Astrocyte of the cerebellum (primary cell): ENCODE measurements at regions of chr2 and their contacts with region 1.

Region 1: GRCh38 chr2:197461057-197461456 is 7.7 kb downstream of the COQ10B start:
- DNase-seq: no peak
- H3K4me3 ChIP-seq: no peak overlapping the region
- CTCF ChIP-seq: no peak

Region 2: DNA sequence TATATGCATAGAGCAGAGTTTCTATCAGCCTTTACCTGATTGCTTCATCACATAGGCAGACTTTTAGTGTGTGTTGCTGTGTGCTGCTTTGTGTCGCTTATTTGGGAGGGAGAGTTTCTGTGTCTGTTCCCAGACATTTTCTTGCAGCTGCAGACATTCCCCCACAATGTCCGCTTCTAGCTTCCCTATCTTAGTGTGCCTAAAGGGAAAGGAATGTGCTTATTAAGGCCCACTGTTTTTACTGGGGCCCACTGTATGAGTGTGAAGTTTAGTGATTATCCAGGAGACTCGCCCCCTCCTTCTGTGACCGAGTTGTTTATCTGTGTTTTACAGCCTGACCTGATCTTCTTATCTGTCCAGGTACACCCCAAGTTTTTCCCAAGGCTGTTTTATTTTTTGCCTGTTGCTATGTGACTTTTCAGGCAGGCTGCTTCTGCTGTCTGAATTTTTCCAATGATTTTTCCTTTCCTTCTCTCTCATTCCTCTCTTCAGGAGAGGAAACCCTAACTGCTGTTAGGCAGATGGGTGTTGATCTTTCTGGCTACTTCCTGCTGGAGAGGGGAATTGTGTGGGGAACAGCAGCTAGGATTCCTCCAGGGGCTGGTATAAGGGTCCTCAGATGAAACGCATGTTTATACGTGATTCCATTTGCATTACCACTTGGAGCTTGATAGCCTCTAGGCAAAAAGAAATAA is 1337.2 kb before region 1 on chr2:
- in situ Hi-C with region 1: no loop called
- DNase-seq: no peak
- H3K4me3 ChIP-seq: no peak overlapping the region
- CTCF ChIP-seq: no peak

Region 3: DNA sequence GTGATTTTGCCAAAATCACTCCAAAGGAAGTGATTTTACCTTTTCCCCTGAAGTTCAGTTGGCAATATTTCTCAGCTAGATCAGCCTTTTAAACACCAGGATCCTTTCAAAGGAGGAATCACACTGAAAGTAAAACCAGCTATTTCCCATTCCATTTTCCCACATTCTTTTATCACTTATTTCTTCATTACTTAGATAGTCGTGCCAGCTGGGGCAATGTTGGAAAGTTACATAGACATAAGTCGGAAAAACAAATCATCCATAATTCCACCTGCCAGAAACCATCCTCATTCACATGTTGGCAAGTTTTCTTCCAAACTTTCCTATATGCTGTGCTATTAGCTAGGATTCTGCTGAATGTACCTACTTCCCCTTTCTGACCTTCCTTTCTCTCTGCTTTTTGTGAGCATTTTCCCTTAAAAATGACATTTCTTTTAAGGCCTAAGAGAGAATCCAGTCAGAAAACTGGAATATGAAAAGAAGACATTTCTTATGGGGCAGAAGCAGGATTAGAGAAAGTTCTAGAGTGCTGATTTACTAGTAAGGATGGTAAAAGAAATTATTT is 1119.7 kb before region 1 on chr2:
- in situ Hi-C with region 1: no loop called
- DNase-seq: no peak
- H3K4me3 ChIP-seq: no peak overlapping the region
- CTCF ChIP-seq: no peak

Region 4: DNA sequence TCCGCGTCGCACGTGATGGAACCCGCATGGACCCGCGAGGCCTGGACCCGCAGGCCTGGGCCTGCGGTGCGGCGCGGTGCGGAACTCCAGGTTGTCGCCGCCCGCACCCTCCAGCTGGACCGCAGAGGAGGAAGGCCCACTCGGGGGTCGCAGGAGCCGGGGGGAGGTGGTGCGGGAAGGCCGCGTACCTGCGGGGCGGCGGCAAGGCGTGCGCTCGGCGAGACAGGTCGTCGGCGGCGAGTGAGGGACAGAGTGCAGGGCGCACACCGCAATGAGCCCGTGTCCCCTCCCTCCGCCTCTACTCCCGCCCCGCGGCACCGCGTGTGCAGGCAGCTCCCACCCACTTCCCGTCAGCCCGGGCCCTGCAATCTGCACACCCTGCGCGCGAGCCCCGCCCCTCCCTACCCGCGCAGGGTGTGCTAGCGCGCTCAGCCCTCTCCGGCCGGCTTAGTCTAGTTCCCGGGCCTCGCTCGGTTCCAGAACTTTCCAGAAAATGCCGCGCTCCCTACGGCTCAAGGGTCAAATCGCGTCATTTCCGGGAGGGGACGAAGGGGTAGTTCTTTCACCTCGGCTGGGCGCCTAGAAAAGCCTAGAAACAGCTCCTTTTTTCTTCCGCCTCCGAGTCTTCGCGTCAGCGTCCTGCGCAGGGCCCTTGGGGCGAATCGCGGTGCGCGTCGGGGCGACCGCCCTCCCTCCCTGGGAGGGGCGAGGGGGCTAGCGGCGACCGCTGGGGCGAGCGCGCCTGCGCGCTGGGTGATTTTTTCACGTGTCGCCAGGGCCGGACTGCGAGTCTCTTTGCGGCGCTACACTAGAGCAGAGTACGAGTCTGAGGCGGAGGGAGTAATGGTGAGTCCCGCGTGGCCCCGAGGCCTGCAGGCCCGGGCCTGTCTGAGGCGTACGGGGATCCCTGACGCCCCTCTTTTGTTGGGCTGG is 38.8 kb after region 1 on chr2 and contains the starts of genes HSPD1 and HSPE1:
- in situ Hi-C with region 1: loop called (anchors 5 kb)
- DNase-seq: peak; percentile 98
- H3K4me3 ChIP-seq: peak within 1 kb of the TSS; percentile 81
- CTCF ChIP-seq: no peak